ENCODE measurements at regions of chr11 and their contacts with region 1.

Region 1: DNA sequence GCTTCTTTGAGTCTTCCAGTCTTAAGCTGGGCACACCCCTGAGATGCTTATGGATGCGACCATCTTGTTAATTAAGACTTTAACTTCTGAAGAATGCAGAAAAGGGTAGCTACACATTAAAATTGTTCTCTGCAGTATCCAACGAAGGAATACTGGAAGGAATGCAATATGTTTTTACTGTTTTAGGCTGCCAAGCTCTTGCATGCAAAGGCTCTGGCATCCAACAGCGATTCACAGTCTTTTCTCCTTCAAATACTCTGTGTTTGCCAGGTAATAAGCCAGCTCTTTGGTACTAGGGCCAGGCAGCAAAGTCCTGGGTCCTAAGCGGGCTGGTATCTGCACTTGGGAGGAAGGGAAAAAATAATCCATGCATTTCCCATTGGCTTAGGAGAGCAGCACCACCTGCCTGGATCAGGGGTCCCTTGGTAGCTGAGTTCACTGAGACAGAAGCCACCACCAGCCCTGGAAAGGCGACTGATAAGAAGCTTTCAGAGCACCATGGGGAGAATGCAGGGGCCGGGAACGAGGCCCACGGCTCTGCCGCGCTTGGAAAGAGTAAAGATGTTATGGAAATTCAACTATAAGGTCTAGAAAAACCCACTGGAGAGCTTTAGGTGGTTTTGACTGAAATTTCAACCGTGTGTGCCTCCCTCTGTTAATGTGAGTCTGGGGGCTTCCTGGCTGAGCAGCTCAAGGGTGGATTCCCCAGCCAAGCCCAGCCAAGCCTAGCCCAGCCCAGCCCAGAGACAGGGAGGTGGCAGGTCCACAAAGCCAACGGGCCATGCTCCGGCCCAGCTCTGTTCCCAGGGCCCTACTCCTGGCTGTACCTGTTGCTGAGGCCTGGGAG is 67.0 kb upstream of the CCND1 start:
- DNase-seq: no peak
- H3K4me3 ChIP-seq: no peak overlapping the region
- H3K27ac ChIP-seq: no peak overlapping the region
- H3K4me1 ChIP-seq: no peaks in the 10 kb centered on the region
- H3K27me3 ChIP-seq: no peaks in the 10 kb centered on the region
- CTCF ChIP-seq: no peak

Region 2: DNA sequence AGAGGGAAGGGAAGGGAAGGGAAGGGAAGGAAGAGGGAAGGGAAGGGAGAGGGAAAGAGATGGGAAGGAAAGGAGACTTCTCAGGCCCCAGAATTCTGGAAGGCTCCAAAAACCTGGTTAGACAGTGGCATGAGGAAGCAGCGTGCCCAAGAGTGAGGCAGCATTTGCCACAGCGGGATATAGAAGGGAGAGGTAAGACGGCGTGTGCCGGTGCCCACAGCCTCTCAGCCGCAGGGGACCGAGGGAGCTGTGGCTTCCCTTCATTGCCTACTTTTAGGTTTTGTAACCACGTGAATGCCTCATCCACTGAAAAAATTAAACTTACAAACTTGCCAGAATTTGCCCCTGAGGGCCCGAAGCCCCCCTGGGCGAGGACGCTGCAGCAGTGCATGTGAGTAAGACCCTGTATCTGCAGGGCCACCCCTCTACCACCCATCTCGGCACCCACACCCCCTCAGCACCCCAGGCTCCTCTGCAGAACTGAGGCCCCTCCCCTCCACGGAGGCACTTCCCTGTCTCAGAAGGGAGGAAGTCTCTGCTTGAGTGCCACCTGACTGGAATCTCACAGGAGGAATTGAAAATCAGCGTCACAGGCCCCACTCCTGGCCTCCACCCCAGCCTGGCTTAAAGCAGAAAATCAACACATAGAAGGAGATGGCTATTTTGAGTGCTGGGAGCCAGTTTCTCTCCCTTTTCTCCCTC is 34.4 kb before region 1 on chr11:
- CTCF ChIA-PET with region 1: no interaction called
- dilution Hi-C with region 1: loop called (anchors 5 kb)
- in situ Hi-C with region 1: no loop called
- intact Hi-C with region 1: no loop called
- DNase-seq: no peak
- H3K4me3 ChIP-seq: no peak overlapping the region
- H3K27ac ChIP-seq: no peak overlapping the region
- H3K4me1 ChIP-seq: no peaks in the 10 kb centered on the region
- H3K27me3 ChIP-seq: no peaks in the 10 kb centered on the region
- CTCF ChIP-seq: no peak

Region 3: DNA sequence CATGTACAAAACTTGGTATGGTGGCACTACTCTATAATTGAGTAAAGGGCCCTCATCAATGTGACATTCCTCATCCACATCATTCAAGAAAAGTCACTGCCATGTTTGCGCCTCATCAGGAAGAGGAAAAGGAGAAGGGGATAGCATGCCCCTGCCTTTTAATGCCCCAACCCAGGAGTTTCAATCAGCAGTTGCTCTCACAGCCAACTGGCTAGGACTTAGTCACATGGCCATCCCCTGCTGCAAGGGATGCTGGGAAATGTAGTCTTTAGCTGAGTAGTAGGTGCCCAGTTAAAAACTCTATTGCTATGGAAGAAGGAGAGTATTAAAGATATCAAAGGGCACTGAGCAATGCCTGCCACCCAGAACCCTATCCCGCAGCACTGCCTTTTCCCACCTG is 56.0 kb after region 1 on chr11:
- CTCF ChIA-PET with region 1: no interaction called
- dilution Hi-C with region 1: loop called (anchors 5 kb)
- in situ Hi-C with region 1: no loop called
- intact Hi-C with region 1: no loop called
- DNase-seq: no peak
- H3K4me3 ChIP-seq: no peak overlapping the region
- H3K27ac ChIP-seq: no peak overlapping the region
- H3K4me1 ChIP-seq: no peaks in the 10 kb centered on the region
- H3K27me3 ChIP-seq: no peaks in the 10 kb centered on the region
- CTCF ChIP-seq: no peak